Keratinocyte (primary cell): ENCODE measurements at regions of chr19 and their contacts with region 1.

Region 1: DNA sequence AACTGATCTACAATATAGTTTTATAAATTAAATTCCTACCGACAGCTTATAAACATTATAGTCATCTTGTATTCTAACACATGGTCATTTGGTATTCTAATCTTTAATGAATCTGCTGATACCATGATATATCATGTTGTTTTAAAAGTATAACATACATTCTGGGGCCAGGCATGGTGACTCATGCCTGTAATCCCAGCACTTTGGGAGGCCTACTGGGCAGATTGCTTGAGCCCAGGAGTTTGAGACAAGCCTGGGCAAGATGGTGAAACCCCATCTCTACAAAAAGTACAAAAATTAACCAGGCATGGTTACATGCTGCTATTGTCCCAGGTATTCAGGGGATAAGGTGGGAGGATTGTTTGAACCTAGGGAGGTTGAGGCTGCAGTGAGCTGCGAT is 3.1 kb downstream of the ZNF383 start:
- DNase-seq: no peak
- H3K4me3 ChIP-seq: no peak overlapping the region
- H3K27ac ChIP-seq: peak overlapping the region; percentile 30
- H3K4me1 ChIP-seq: peaks cover 15% of the 10 kb centered on the region
- H3K27me3 ChIP-seq: no peaks in the 10 kb centered on the region
- CTCF ChIP-seq: no peak

Region 2: DNA sequence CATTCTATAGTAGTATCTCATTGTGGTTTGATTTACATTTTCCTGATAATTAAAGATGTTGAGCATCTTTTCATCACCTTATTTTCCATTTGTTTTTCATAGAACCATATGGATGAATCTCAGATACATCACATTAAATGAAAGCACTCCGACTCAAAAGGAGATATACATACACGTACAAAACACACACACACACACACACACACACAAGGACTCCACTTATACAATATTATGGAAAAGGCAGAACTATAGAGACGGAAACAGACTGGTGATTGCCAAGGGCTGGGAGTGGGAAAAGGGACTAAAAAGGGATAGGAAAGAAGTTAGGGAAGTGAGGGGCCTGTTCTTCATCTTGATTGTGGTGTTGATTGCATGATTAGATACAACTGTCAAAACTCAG is 72.9 kb before region 1 on chr19:
- dilution Hi-C with region 1: no loop called
- DNase-seq: no peak
- H3K4me3 ChIP-seq: no peak overlapping the region
- H3K27ac ChIP-seq: no peak overlapping the region
- H3K4me1 ChIP-seq: no peaks in the 10 kb centered on the region
- H3K27me3 ChIP-seq: no peaks in the 10 kb centered on the region
- CTCF ChIP-seq: no peak

Region 3: GRCh38 chr19:37172368-37173366 is 48.5 kb before region 1 on chr19 and contains the start of gene ZNF585A:
- dilution Hi-C with region 1: loop called (anchors 5 kb)
- DNase-seq: peak; percentile 63
- H3K4me3 ChIP-seq: peak within 1 kb of the TSS; percentile 53 to 89 (median 79)
- H3K27ac ChIP-seq: peak within 1 kb of the TSS; percentile 60
- H3K4me1 ChIP-seq: no peaks in the 10 kb centered on the region
- H3K27me3 ChIP-seq: no peaks in the 10 kb centered on the region
- CTCF ChIP-seq: peak; percentile 20 to 34 (median 29)
- polyA plus RNA-seq, gene ZNF585A: 10.8 to 13.2 TPM (median 11.5 TPM) in 3 replicates